HEK293 (cell line): ENCODE measurements at regions of chr1 and their contacts with region 1.

Region 1: DNA sequence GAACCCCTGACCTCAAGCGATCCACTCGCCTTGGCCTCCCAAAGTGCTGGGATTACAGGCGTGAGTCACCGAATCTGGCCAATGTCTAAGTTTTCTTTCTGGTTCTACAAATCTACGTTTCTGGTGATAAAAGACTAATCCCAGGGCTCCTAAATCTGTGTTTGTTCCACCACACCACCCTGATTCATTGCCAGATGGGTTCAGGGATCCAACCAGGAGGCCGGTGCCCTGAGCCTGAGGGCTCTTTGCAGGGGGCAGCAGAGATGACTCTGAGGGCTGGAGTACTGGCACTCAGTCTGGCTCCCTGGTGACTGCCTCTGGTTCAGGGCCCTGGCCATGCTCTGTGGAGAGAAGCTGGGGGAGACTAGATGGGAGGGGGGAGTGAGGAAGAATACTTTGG is 10.5 kb upstream of the OPRD1 start:
- H3K4me3 ChIP-seq: no peak overlapping the region
- H3K27ac ChIP-seq: no peak overlapping the region
- H3K4me1 ChIP-seq: no peaks in the 10 kb centered on the region
- CTCF ChIP-seq: no peak

Region 2: GRCh38 chr1:29202584-29203340 is 401.3 kb after region 1 on chr1:
- CTCF ChIA-PET with region 1: no interaction called
- POLR2A ChIA-PET with region 1: interaction called, 10 read pairs
- H3K4me3 ChIP-seq: no peak overlapping the region
- H3K27ac ChIP-seq: no peak overlapping the region
- H3K4me1 ChIP-seq: no peaks in the 10 kb centered on the region
- CTCF ChIP-seq: peak; percentile 89